CD8-positive, alpha-beta T cell (primary cell): ENCODE measurements at regions of chr2 and their contacts with region 1.

Region 1: GRCh38 chr2:74529357-74530238 is at the starts of genes AUP1 and HTRA2:
- DNase-seq: peak; percentile 70 to 93 (median 84)
- ATAC-seq: peak; percentile 89
- H3K4me3 ChIP-seq: peak within 1 kb of the TSS; percentile 95 to 99
- H3K4me3 Mint-ChIP-seq: peak within 1 kb of the TSS; percentile 93
- H3K27ac ChIP-seq: peak within 1 kb of the TSS; percentile 63 to 95
- H3K27ac Mint-ChIP-seq: peak within 1 kb of the TSS; percentile 95
- H3K4me1 ChIP-seq: peaks cover 25% of the 10 kb centered on the region
- H3K4me1 Mint-ChIP-seq: peaks cover 38% of the 10 kb centered on the region
- H3K27me3 ChIP-seq: no peaks in the 10 kb centered on the region
- H3K27me3 Mint-ChIP-seq: no peaks in the 10 kb centered on the region
- CTCF ChIP-seq: no peak
- total RNA-seq, gene AUP1: 201 to 202 TPM
- total RNA-seq, gene HTRA2: 15.7 TPM

Region 2: DNA sequence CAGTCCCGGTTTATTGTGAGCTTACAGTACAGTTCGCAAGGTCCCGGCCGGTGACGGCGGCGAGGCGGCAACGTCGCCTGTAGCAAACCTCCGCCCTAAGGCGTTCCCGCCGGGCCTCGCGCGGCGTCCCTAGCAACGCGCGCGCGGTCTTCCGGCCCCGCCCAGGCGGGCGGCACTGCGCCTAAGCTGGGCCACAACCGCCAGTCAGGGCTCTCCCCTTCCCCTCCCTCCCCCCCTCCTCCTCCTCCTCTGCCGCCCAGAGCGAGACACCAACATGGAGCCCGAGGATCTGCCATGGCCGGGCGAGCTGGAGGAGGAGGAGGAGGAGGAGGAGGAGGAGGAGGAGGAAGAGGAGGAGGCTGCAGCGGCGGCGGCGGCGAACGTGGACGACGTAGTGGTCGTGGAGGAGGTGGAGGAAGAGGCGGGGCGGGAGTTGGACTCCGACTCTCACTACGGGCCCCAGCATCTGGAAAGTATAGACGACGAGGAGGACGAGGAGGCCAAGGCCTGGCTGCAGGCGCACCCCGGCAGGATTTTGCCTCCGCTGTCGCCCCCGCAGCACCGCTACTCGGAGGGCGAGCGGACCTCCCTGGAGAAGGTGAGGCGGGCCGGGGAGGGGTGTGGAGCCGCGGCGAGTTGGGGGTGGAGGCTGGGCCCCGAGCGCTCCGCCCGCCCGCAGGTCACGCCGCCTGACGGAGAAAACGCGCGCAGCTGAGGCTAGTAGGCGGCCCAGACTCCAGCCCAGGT is 1143.8 kb before region 1 on chr2 and contains the start of gene ALMS1:
- CTCF ChIA-PET with region 1: no interaction called
- POLR2A ChIA-PET with region 1: no interaction called
- intact Hi-C with region 1: loop called in 1 of 2 experiments (anchors 5 kb)
- DNase-seq: peak; percentile 76 to 96 (median 86)
- ATAC-seq: peak; percentile 88
- H3K4me3 ChIP-seq: peak within 1 kb of the TSS; percentile 75 to 88
- H3K4me3 Mint-ChIP-seq: peak within 1 kb of the TSS; percentile 88
- H3K27ac ChIP-seq: peak within 1 kb of the TSS; percentile 88 to 90
- H3K27ac Mint-ChIP-seq: peak within 1 kb of the TSS; percentile 94
- H3K4me1 ChIP-seq: peaks cover 20% of the 10 kb centered on the region
- H3K4me1 Mint-ChIP-seq: peaks cover 39% of the 10 kb centered on the region
- H3K27me3 ChIP-seq: no peaks in the 10 kb centered on the region
- H3K27me3 Mint-ChIP-seq: peaks cover 2% of the 10 kb centered on the region
- CTCF ChIP-seq: no peak
- total RNA-seq, gene ALMS1: 14.8 to 16.4 TPM

Region 3: GRCh38 chr2:74267068-74267467 is 262.5 kb before region 1 on chr2:
- CTCF ChIA-PET with region 1: no interaction called
- POLR2A ChIA-PET with region 1: no interaction called
- intact Hi-C with region 1: loop called in 1 of 2 experiments (anchors 5 kb)
- DNase-seq: peak; percentile 13 to 80 (median 54)
- ATAC-seq: peak; percentile 93
- H3K4me3 ChIP-seq: no peak overlapping the region
- H3K4me3 Mint-ChIP-seq: peak overlapping the region; percentile 43
- H3K27ac ChIP-seq: no peak overlapping the region
- H3K27ac Mint-ChIP-seq: peak overlapping the region; percentile 27
- H3K4me1 ChIP-seq: peaks cover 9% of the 10 kb centered on the region
- H3K4me1 Mint-ChIP-seq: peaks cover 12% of the 10 kb centered on the region
- H3K27me3 ChIP-seq: no peaks in the 10 kb centered on the region
- H3K27me3 Mint-ChIP-seq: no peaks in the 10 kb centered on the region
- CTCF ChIP-seq: peak; percentile 60

Region 4: DNA sequence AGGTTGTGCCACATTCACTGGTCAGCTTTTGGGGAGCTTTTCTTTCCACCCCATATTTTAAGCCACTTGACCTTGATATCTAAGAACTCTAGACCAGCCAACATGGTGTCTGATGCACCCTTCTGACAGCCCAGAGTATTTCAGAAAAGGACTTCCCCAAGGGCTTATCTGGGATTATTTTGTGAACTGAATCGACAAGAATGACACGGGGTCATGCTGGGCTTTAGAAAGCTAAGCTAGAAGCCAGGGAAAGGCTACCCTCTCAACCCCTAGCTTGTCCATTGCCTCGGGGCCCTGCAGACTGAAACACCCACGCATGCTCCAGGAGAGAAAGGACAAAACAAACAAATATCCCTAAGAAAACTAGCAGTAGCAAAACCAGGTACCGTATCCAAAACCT is 202.4 kb before region 1 on chr2:
- CTCF ChIA-PET with region 1: no interaction called
- POLR2A ChIA-PET with region 1: no interaction called
- intact Hi-C with region 1: no loop called
- DNase-seq: no peak
- ATAC-seq: no peak
- H3K4me3 ChIP-seq: no peak overlapping the region
- H3K4me3 Mint-ChIP-seq: no peak overlapping the region
- H3K27ac ChIP-seq: no peak overlapping the region
- H3K27ac Mint-ChIP-seq: no peak overlapping the region
- H3K4me1 ChIP-seq: no peaks in the 10 kb centered on the region
- H3K4me1 Mint-ChIP-seq: no peaks in the 10 kb centered on the region
- H3K27me3 ChIP-seq: no peaks in the 10 kb centered on the region
- H3K27me3 Mint-ChIP-seq: no peaks in the 10 kb centered on the region
- CTCF ChIP-seq: no peak

Region 5: GRCh38 chr2:74458132-74458925 is 71.3 kb before region 1 on chr2 and contains the start of gene WBP1:
- CTCF ChIA-PET with region 1: interaction called, 14 read pairs
- POLR2A ChIA-PET with region 1: interaction called, 17 read pairs
- intact Hi-C with region 1: loop called (anchors 1 kb)
- DNase-seq: peak; percentile 96 to 100 (median 98)
- ATAC-seq: peak; percentile 77
- H3K4me3 ChIP-seq: peak within 1 kb of the TSS; percentile 84 to 95
- H3K4me3 Mint-ChIP-seq: peak within 1 kb of the TSS; percentile 97
- H3K27ac ChIP-seq: peak within 1 kb of the TSS; percentile 93 to 100
- H3K27ac Mint-ChIP-seq: peak within 1 kb of the TSS; percentile 99
- H3K4me1 ChIP-seq: peaks cover 34% of the 10 kb centered on the region
- H3K4me1 Mint-ChIP-seq: peaks cover 57% of the 10 kb centered on the region
- H3K27me3 ChIP-seq: no peaks in the 10 kb centered on the region
- H3K27me3 Mint-ChIP-seq: no peaks in the 10 kb centered on the region
- CTCF ChIP-seq: no peak
- total RNA-seq, gene WBP1: 68.5 to 70.6 TPM

Region 6: GRCh38 chr2:74507145-74507925 is 22.3 kb before region 1 on chr2 and contains the start of gene PCGF1:
- CTCF ChIA-PET with region 1: interaction called, 9 read pairs
- POLR2A ChIA-PET with region 1: interaction called, 8 read pairs
- intact Hi-C with region 1: loop called (anchors 1 kb)
- DNase-seq: peak; percentile 98 to 100 (median 99)
- ATAC-seq: peak; percentile 90
- H3K4me3 ChIP-seq: peak within 1 kb of the TSS; percentile 96 to 99
- H3K4me3 Mint-ChIP-seq: peak within 1 kb of the TSS; percentile 99
- H3K27ac ChIP-seq: peak within 1 kb of the TSS; percentile 85 to 100
- H3K27ac Mint-ChIP-seq: peak within 1 kb of the TSS; percentile 99
- H3K4me1 ChIP-seq: peaks cover 32% of the 10 kb centered on the region
- H3K4me1 Mint-ChIP-seq: peaks cover 54% of the 10 kb centered on the region
- H3K27me3 ChIP-seq: peaks cover 13 to 20% of the 10 kb centered on the region in 2 experiments
- H3K27me3 Mint-ChIP-seq: peaks cover 54% of the 10 kb centered on the region
- CTCF ChIP-seq: peak; percentile 3
- total RNA-seq, gene PCGF1: 18.6 to 22.9 TPM

Region 7: GRCh38 chr2:74560591-74561421 is 31.2 kb after region 1 on chr2:
- CTCF ChIA-PET with region 1: no interaction called
- POLR2A ChIA-PET with region 1: interaction called, 3 read pairs
- intact Hi-C with region 1: loop called in 1 of 2 experiments (anchors 1 kb)
- DNase-seq: no peak
- ATAC-seq: no peak
- H3K4me3 ChIP-seq: no peak overlapping the region
- H3K4me3 Mint-ChIP-seq: no peak overlapping the region
- H3K27ac ChIP-seq: no peak overlapping the region
- H3K27ac Mint-ChIP-seq: no peak overlapping the region
- H3K4me1 ChIP-seq: no peaks in the 10 kb centered on the region
- H3K4me1 Mint-ChIP-seq: peaks cover 4% of the 10 kb centered on the region
- H3K27me3 ChIP-seq: no peaks in the 10 kb centered on the region
- H3K27me3 Mint-ChIP-seq: peaks cover 29% of the 10 kb centered on the region
- CTCF ChIP-seq: no peak

Region 8: DNA sequence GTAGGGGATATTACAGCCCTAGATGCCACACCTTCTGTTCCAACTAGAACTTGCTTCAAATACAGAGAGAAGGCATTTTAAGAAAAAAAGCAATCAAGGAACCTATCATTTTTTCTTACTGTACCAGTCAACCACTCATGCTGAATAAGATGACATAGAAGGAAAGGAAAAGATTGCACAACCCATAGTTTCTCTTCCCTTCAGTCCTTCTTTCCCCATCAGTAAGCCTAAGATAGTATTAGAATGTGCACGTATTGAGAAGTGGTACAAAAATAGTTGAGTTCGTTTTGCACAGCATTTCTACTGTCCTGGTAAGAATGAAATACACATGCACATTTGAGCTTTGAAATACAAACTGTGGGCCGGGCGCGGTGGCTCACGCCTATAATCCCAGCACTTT is 277.3 kb after region 1 on chr2:
- CTCF ChIA-PET with region 1: no interaction called
- POLR2A ChIA-PET with region 1: no interaction called
- intact Hi-C with region 1: no loop called
- DNase-seq: no peak
- ATAC-seq: no peak
- H3K4me3 ChIP-seq: no peak overlapping the region
- H3K4me3 Mint-ChIP-seq: no peak overlapping the region
- H3K27ac ChIP-seq: no peak overlapping the region
- H3K27ac Mint-ChIP-seq: no peak overlapping the region
- H3K4me1 ChIP-seq: no peaks in the 10 kb centered on the region
- H3K4me1 Mint-ChIP-seq: no peaks in the 10 kb centered on the region
- H3K27me3 ChIP-seq: no peaks in the 10 kb centered on the region
- H3K27me3 Mint-ChIP-seq: peaks cover 6% of the 10 kb centered on the region
- CTCF ChIP-seq: no peak